ENCODE measurements at regions of chr15 and their contacts with region 1.

Region 1: GRCh38 chr15:60573936-60574335 is 95.0 kb upstream of the ICE2 start:
- DNase-seq: no peak
- H3K4me3 ChIP-seq: no peak overlapping the region
- H3K27ac ChIP-seq: no peak overlapping the region
- H3K4me1 ChIP-seq: peaks cover 0 to 6% of the 10 kb centered on the region in 2 donors
- H3K27me3 ChIP-seq: no peaks in the 10 kb centered on the region
- CTCF ChIP-seq: no peak

Region 2: DNA sequence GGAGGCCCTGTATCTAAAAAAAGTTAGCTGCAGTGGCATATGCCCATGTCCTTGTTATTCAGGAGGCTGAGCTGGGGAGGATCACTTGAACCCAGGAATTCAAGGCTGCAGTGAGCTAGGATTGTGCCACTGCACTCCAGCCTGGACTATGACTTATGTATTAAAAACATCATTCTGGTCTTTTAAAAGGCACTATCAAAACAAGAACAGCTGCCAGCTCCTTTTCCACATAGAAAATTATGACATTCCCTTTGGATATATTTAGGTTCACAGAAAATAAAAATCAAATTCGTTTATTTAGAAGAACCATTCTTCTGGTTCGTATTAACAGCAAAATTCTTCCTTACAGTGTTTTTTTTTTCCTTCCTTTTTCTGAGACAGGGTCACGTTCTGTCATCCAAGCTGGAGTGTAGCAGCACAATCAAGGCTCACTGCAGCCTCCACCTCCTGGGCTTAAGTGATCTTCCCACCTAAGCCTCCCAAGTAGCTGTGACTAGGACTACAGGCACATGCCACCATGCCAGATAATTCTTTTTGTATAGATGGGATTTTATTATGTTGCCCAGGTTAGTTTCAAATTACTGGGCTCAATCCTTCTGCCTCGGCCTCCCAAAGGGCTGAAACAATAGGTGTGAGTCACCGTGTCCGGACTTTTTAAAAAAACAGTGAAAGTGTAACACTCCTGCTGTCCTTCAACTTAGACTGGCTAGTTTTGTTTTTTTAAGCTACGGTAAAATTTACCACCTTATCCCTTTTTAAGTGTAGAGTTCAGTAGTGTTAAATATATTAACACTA is 108.9 kb before region 1 on chr15:
- intact Hi-C with region 1: no loop called
- DNase-seq: no peak
- H3K4me3 ChIP-seq: no peak overlapping the region
- H3K27ac ChIP-seq: no peak overlapping the region
- H3K4me1 ChIP-seq: no peaks in the 10 kb centered on the region
- H3K27me3 ChIP-seq: no peaks in the 10 kb centered on the region
- CTCF ChIP-seq: no peak

Region 3: GRCh38 chr15:60592371-60593169 is 18.6 kb after region 1 on chr15:
- intact Hi-C with region 1: no loop called
- DNase-seq: peak; percentile 48 to 90
- H3K4me3 ChIP-seq: peak overlapping the region; percentile 80 to 99
- H3K27ac ChIP-seq: peak overlapping the region; percentile 80 to 89
- H3K4me1 ChIP-seq: peaks cover 0 to 11% of the 10 kb centered on the region in 2 donors
- H3K27me3 ChIP-seq: no peaks in the 10 kb centered on the region
- CTCF ChIP-seq: peak in 2 of 3 experiments; percentile 27 to 35

Region 4: GRCh38 chr15:61282661-61283060 is 708.7 kb after region 1 on chr15:
- intact Hi-C with region 1: loop called (anchors 10 kb)
- DNase-seq: no peak
- H3K4me3 ChIP-seq: no peak overlapping the region
- H3K27ac ChIP-seq: no peak overlapping the region
- H3K4me1 ChIP-seq: no peaks in the 10 kb centered on the region
- H3K27me3 ChIP-seq: no peaks in the 10 kb centered on the region
- CTCF ChIP-seq: no peak